ENCODE measurements at regions of chr9 and their contacts with region 1.

Region 1: DNA sequence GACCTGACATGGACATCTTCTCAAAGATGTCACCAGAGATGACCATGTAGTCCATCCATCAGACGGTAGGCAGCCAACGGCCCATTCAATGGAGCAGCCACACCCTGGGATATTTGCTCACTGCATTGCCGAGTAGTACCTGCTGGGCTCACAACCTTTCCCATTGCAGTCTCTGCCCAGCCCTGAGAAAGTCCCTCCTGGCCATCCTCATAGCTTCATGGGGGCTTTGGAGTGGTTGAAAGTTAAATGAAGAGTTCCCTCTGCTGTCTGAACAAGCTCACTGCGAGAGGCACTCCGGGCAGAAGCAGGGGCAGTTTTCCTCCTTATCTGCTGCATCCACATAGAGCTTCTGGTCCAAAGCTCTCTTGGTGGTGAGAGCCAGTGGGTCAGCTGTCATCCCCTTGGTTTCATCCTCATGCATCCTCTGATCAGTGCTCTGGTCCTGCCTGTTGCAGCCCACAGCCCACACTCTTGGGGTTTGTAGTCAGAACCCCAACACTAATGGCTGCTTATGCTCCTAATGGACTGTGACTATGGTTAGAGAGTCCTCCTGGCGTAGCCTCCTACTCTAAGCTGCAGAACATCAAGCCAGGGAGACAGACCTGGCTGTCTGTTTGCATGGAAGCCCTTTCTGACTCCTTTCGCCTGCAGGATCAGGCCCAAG is 23.4 kb downstream of the TNFSF8 start:
- DNase-seq: no peak
- H3K4me3 ChIP-seq: no peak overlapping the region
- H3K27ac ChIP-seq: no peak overlapping the region
- H3K4me1 ChIP-seq: no peaks in the 10 kb centered on the region
- H3K27me3 ChIP-seq: no peaks in the 10 kb centered on the region
- CTCF ChIP-seq: no peak
- EP300 ChIP-seq: no peak
- POLR2A ChIP-seq: no peak

Region 2: GRCh38 chr9:114745108-114745848 is 161.8 kb before region 1 on chr9:
- intact Hi-C with region 1: loop called in 1 of 4 experiments (anchors 10 kb)
- DNase-seq: no peak
- H3K4me3 ChIP-seq: no peak overlapping the region
- H3K27ac ChIP-seq: no peak overlapping the region
- H3K4me1 ChIP-seq: no peaks in the 10 kb centered on the region
- H3K27me3 ChIP-seq: no peaks in the 10 kb centered on the region
- CTCF ChIP-seq: no peak
- EP300 ChIP-seq: no peak
- POLR2A ChIP-seq: no peak